Cardiac septum (tissue), 1 donor: ENCODE measurements at regions of chrX and their contacts with region 1.

Region 1: DNA sequence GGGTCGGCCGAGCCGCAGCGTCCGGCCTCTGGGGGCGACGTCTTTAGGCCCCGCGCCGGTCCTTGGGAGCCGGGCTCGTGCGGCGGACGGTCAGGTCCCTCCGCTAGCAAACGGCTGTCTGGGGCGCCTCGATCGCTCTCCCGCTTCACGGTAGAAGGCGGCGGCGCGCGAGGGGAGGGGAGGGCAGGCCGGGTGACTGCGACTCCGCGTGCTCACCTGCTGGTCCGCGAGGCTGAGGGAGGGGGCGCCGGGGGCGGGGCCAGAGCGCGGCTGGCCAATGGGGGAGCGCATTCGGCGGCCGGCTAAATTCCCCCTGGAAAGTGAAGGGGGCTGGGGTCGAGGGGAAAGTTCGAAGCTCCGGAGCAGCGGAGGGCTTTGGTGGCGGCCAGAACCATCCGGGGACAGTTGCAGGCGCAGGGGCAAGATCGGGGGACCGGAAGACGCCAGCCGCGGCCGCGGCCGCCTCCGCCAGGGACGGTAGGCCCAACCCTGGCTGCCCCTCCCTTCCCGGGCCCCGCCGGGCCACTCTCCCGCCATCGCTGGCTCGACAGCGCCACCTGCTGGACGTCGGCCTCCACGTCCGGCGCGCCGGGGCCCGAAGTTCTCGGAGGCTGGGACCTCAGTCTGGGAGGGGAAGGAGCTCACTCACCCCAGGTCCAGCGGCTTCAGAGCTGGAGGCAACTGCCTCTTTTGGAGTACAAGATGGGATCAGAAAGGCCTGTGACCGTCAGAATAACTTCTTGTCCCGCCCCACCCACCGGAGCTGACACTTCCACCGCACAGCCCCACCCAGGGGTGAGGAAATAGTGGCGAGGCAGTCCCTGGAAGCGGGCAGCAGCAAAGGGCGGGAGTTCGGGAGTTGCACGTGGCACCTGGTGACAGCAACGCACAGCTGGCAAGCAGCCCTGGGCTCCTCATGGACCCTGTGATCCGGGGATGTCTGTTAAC is 49.9 kb downstream of the ELF4 start:
- DNase-seq: peak; percentile 93

Region 2: DNA sequence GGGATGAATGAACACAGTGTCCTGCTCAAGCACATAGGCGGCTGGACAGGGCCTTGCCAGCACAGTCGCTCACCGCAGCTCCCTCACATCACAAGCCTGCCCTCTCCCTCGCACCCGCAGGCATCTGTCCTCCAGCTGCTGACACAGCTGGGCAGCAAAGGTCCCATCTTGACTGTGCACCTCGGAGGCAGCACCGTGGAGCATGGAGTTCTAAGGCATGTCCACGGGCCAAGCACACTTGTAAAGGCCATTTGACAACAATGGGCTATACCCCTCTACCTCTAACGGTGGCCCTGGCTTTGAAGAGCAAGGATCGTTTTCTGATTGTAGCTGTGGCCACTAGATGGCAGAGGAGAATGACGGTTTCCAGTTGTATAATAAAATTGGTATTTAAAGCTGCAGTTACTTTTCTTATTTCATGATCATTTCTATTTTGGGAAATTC is 459.4 kb before region 1 on chrX:
- intact Hi-C with region 1: loop called (anchors 5 kb)
- DNase-seq: no peak

Region 3: DNA sequence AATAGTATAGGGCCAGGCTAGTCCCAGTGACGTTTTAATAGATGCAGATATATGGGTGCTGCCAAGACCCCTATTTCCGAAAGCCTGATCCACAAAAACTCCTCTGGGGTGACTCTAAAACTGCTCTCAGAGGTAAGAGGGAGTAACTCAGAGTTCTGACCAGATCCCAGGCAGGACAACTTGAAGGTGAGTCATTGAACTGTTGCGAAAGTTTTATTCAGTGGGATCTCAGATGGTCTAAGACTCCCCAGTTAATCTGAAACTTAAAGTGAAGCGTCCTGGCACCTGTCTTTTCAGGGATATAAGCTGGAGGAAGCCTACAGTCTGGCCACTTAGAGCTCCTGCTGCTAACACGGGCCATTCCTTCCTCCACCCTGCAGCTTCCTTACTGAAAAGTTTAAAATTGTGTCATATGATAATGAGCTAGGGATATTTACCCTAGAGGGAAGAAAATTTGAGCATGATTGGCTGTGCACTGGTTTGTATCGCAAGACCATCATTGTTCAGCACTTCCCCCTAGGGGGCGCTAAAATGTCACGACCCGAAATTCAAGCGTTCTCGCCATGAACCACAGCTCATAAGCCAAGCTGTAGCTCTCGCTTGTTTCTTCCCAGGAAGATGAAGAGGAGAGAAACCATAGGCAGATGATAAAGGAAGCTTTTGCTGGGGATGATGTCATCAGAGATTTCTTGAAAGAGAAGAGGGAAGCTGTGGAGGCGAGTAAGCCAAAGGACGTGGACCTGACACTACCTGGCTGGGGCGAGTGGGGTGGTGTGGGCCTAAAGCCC is 134.9 kb before region 1 on chrX:
- intact Hi-C with region 1: loop called (anchors 2 kb)
- DNase-seq: peak; percentile 84

Region 4: GRCh38 chrX:131277547-131278136 is 1217.2 kb after region 1 on chrX:
- intact Hi-C with region 1: no loop called
- DNase-seq: no peak